ENCODE measurements at regions of chr4 and their contacts with region 1.

Region 1: GRCh38 chr4:184263910-184264732 is 46.4 kb upstream of the ENPP6 start:
- DNase-seq: peak; percentile 94

Region 2: DNA sequence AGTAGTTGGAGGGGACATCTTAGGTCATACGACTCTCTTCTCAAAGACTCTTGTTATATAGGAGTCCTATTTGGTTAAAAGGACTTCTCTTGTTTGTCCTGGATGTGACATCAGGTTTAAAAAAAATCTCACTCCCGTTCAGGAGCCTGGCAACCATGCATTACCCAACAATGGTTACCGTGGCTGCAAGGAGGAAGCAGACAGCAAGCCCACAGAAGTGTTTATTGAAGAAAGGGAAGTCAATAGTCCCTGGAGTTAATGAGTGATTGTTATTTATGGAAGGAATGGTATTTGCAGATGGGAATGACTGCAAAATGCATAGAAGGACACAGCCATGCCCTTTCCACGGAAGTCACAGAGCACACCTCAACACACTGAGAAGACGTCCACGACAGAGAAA is 29.4 kb after region 1 on chr4:
- intact Hi-C with region 1: no loop called
- DNase-seq: peak; percentile 83

Region 3: GRCh38 chr4:184417802-184418511 is 153.8 kb after region 1 on chr4:
- intact Hi-C with region 1: no loop called
- DNase-seq: no peak

Region 4: GRCh38 chr4:184733654-184734524 is 469.8 kb after region 1 on chr4 and contains the start of gene CENPU:
- intact Hi-C with region 1: loop called (anchors 5 kb)
- DNase-seq: peak; percentile 95
- total RNA-seq, gene CENPU: 1.5 TPM

Measured in cardiac septum (tissue), 1 donor.